ENCODE measurements at regions of chr1 and their contacts with region 1.

Region 1: GRCh38 chr1:200669314-200670241 is at the start of gene DDX59:
- DNase-seq: peak; percentile 100
- ATAC-seq: peak; percentile 76
- H3K4me3 ChIP-seq: peak within 1 kb of the TSS; percentile 86
- H3K27ac ChIP-seq: peak within 1 kb of the TSS; percentile 97
- H3K4me1 ChIP-seq: peaks cover 28% of the 10 kb centered on the region
- H3K27me3 ChIP-seq: no peaks in the 10 kb centered on the region
- CTCF ChIP-seq: no peak
- total RNA-seq, gene DDX59: 24.6 and 29.4 TPM in 2 replicates

Region 2: GRCh38 chr1:200639790-200640669 is 29.5 kb before region 1 on chr1:
- CTCF ChIA-PET with region 1: no interaction called
- POLR2A ChIA-PET with region 1: interaction called, 4 read pairs
- intact Hi-C with region 1: loop called (anchors 2 kb)
- DNase-seq: peak; percentile 97
- ATAC-seq: peak; percentile 100
- H3K4me3 ChIP-seq: no peak overlapping the region
- H3K27ac ChIP-seq: peak overlapping the region; percentile 81
- H3K4me1 ChIP-seq: peaks cover 20% of the 10 kb centered on the region
- H3K27me3 ChIP-seq: no peaks in the 10 kb centered on the region
- CTCF ChIP-seq: no peak

Region 3: DNA sequence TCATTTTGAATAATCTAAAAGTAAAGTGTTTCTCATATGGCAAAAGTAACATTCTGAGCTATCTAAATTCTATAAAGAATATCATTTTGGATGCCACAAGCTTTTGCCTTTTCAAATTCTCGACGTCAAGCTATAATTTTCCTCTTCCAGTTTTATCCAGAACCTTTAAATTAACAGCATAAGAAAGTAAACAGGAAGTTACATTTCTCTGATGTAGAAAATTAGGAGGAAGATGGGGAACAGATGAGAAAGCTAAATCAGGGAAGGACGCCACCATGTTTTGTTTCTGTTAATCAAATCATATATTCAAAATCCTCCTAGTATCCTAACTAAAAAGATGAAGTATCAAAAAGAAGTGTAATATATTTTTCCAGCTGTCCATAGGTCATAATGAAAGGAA is 60.3 kb after region 1 on chr1:
- CTCF ChIA-PET with region 1: no interaction called
- POLR2A ChIA-PET with region 1: interaction called, 10 read pairs
- intact Hi-C with region 1: no loop called
- DNase-seq: no peak
- ATAC-seq: no peak
- H3K4me3 ChIP-seq: no peak overlapping the region
- H3K27ac ChIP-seq: no peak overlapping the region
- H3K4me1 ChIP-seq: peaks cover 11% of the 10 kb centered on the region
- H3K27me3 ChIP-seq: no peaks in the 10 kb centered on the region
- CTCF ChIP-seq: no peak

Region 4: GRCh38 chr1:200780545-200781369 is 111.2 kb after region 1 on chr1:
- CTCF ChIA-PET with region 1: no interaction called
- POLR2A ChIA-PET with region 1: no interaction called
- intact Hi-C with region 1: loop called (anchors 5 kb)
- DNase-seq: peak; percentile 32
- ATAC-seq: peak; percentile 71
- H3K4me3 ChIP-seq: peak overlapping the region; percentile 22; the same call in 1 of the 2 replicates
- H3K27ac ChIP-seq: no peak overlapping the region
- H3K4me1 ChIP-seq: 0 out of 2 replicates have a peak, but pooled peaks cover 3% of the 10 kb centered on the region
- H3K27me3 ChIP-seq: no peaks in the 10 kb centered on the region
- CTCF ChIP-seq: 0 out of 2 replicates have a peak, but pooled peaks have one; percentile 18

Region 5: GRCh38 chr1:200883118-200883517 is 213.5 kb after region 1 on chr1:
- CTCF ChIA-PET with region 1: no interaction called
- POLR2A ChIA-PET with region 1: interaction called, 10 read pairs
- intact Hi-C with region 1: no loop called
- DNase-seq: no peak
- ATAC-seq: no peak
- H3K4me3 ChIP-seq: no peak overlapping the region
- H3K27ac ChIP-seq: no peak overlapping the region
- H3K4me1 ChIP-seq: peaks cover 1% of the 10 kb centered on the region
- H3K27me3 ChIP-seq: peaks cover 28% of the 10 kb centered on the region
- CTCF ChIP-seq: no peak